Esophagus muscularis mucosa (tissue), 4 donors: ENCODE measurements at regions of chr6 and their contacts with region 1.

Region 1: DNA sequence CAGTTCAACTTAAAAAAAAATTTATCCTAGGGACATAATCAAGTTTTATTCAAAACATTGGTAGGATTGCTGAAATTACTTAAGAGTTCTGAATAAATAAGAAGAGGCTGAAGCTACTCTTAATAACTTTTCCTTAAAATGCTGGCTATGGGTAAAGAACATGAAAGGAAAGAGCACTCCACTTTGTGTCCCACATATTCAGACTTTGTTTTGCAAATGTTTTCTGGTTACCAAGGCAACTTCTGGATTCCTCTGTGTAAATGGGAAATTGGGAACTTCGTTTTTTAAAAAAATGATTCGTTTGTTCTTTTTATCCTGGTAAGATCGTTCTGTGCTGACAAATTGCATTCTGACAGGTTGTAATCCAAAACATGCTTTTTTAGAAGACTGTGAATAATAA is 115.0 kb downstream of the KIF6 start:
- DNase-seq: no peak
- H3K4me3 ChIP-seq: no peak overlapping the region
- H3K27ac ChIP-seq: peak overlapping the region; percentile 59 to 82 (median 70)
- H3K4me1 ChIP-seq: peaks cover 0 to 57% (median 44%) of the 10 kb centered on the region in 4 donors
- H3K27me3 ChIP-seq: no peaks in the 10 kb centered on the region
- CTCF ChIP-seq: no peak
- EP300 ChIP-seq: no peak
- POLR2A ChIP-seq: no peak

Region 2: DNA sequence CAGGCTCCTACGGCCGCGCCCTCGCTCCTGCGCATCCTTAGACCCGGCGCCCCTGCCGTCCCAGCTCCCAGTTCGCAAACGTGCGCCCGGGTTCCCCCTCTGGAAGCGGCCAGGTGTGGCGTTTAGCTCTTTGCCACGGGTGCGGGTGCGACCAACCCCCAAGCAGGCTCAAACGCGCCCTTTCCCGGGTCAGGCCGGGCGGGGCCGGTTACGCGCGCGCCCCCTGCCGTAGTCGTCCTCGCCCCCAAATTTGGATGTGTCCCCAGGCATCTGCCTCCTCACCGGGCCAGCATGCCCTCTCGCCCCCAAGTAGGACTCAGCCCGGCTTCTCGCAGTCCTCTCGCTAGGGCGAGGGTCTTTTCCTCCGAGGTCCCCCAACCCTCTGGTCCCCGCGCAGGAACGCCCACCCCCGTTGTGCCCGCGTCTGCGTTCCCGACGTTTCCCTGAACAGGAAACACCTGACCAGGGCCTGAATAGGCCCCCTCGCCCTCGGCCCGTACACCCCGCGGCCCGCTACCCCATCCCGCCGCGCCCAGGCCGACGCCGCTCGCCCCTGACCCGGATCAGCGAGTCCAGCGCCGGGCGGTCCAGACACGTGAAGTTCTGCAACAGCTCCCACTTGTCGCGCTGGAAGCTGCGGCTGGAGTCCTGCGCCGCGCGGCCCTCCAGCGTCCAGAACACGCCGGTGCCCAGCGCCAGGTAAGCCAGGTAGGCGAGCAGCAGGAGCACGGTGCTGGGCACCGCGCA is 296.5 kb before region 1 on chr6:
- intact Hi-C with region 1: no loop called
- DNase-seq: no peak
- H3K4me3 ChIP-seq: peak overlapping the region; percentile 36 to 43 (median 39)
- H3K27ac ChIP-seq: no peak overlapping the region
- H3K4me1 ChIP-seq: peaks cover 11 to 21% (median 18%) of the 10 kb centered on the region in 4 donors
- H3K27me3 ChIP-seq: peaks cover 0 to 67% (median 21%) of the 10 kb centered on the region in 4 donors
- CTCF ChIP-seq: no peak
- EP300 ChIP-seq: no peak
- POLR2A ChIP-seq: no peak

Region 3: GRCh38 chr6:39496915-39497314 is 113.3 kb before region 1 on chr6:
- intact Hi-C with region 1: loop called (anchors 10 kb)
- DNase-seq: no peak
- H3K4me3 ChIP-seq: no peak overlapping the region
- H3K27ac ChIP-seq: peak overlapping the region; percentile 51 to 62 (median 55)
- H3K4me1 ChIP-seq: peaks cover 14 to 65% (median 58%) of the 10 kb centered on the region in 4 donors
- H3K27me3 ChIP-seq: no peaks in the 10 kb centered on the region
- CTCF ChIP-seq: peak; percentile 12 to 38 (median 16)
- EP300 ChIP-seq: no peak
- POLR2A ChIP-seq: no peak

Region 4: GRCh38 chr6:39664173-39664572 is 54.0 kb after region 1 on chr6:
- intact Hi-C with region 1: loop called (anchors 5 kb)
- DNase-seq: no peak
- H3K4me3 ChIP-seq: no peak overlapping the region
- H3K27ac ChIP-seq: no peak overlapping the region
- H3K4me1 ChIP-seq: peaks cover 0 to 42% (median 34%) of the 10 kb centered on the region in 4 donors
- H3K27me3 ChIP-seq: no peaks in the 10 kb centered on the region
- CTCF ChIP-seq: peak in 1 of 3 experiments; percentile 8
- EP300 ChIP-seq: no peak
- POLR2A ChIP-seq: no peak